Transverse colon (tissue), 4 donors: ENCODE measurements at regions of chr17 and their contacts with region 1.

Region 1: DNA sequence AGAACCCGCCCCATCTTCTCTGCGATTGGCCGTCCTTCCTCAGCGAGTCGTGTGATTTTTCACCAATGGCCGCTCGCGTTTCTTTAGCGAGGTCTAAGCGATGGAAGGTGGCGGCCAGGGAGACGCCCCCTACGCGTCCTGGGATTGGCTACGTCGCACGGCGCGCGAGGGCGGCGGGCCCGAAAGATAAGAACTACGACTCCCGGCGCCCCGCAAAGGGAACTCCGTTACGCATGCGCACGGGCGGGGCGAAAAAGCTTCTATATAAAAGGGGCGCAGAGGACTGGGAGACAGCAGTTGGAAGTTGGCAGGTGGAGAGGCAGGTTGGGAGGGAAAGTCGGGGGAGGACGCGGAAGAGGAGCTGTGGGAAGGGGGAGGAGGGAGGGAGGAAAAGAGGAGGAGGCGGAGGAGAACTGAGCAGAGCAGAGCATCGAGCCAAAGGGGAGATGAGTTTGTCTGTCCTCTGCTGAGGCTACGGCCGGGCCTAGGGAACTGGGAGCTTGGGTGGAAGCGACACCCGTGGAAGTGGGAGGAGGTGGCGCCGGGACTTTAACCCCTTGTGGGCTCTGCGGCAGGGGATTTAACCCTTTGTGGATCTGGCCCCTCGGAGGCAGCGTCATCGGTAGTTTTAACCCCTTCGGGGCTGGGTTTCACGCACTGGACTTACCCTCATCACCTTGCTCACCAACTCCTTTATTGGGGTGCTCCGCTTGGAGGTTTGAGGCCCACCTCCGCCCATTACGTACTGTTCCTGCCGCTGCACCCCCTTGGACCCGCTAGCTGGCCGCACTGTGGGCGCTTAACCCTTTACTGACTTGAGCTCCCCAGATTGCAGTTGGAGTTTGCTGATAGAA is at the start of gene HEXIM1:
- DNase-seq: peak; percentile 99
- H3K4me3 ChIP-seq: peak within 1 kb of the TSS; percentile 69 to 90 (median 78)
- H3K27ac ChIP-seq: peak within 1 kb of the TSS; percentile 98 to 99 (median 98)
- H3K4me1 ChIP-seq: peaks cover 17 to 67% (median 49%) of the 10 kb centered on the region in 4 donors
- H3K27me3 ChIP-seq: no peaks in the 10 kb centered on the region
- CTCF ChIP-seq: no peak
- EP300 ChIP-seq: no peak
- POLR2A ChIP-seq: peak; percentile 100
- total RNA-seq, gene HEXIM1: 38.0 to 54.9 (median 42.6) TPM

Region 2: GRCh38 chr17:44186307-44187130 is 961.9 kb before region 1 on chr17 and contains the start of gene TMUB2:
- in situ Hi-C with region 1: no loop called
- intact Hi-C with region 1: loop called (anchors 10 kb)
- DNase-seq: peak; percentile 100
- H3K4me3 ChIP-seq: peak within 1 kb of the TSS; percentile 92 to 95 (median 93)
- H3K27ac ChIP-seq: peak within 1 kb of the TSS; percentile 95 to 97 (median 96)
- H3K4me1 ChIP-seq: peaks cover 11 to 29% (median 23%) of the 10 kb centered on the region in 4 donors
- H3K27me3 ChIP-seq: no peaks in the 10 kb centered on the region
- CTCF ChIP-seq: no peak
- EP300 ChIP-seq: peak; percentile 20
- POLR2A ChIP-seq: peak; percentile 84
- total RNA-seq, gene TMUB2: 53.4 to 70.5 (median 60.6) TPM

Region 3: DNA sequence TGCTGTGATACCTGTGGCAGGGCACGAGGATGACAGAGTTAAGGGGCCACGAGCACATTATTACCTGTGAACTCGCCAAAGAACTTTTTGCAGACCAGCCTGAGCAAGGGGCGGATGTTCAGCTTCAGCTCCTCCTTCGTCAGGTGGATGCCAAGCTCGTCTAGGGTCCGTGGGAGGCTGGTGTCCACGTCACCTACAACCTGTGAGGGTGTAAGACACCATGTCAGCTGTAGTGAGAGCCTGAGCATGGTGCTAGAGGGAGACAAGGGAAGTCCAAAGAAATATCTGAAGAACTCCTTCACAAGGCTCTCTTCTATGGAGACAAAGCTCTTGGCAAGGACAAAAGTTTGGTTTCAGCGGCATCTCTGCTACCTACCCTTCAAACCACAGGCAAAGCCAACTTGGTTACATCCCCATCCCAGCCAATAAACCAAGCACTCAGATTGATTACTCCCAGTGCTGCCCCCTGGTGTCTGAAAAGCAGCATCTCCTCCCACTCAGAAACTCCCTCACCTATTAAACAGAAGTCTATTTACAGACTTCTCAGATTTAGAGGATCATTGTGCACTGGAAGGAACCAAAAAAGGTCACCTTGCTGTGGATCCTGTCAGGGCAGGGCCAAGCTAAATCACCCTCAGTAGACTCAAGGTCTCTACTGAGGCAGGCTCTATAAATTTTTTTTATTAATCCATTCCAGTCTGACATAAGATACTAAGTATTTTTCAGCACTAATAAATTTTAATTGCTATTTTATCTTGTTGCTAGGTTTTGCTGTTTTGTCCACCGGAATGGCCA is 283.3 kb before region 1 on chr17:
- in situ Hi-C with region 1: no loop called
- intact Hi-C with region 1: no loop called
- DNase-seq: peak; percentile 69
- H3K4me3 ChIP-seq: no peak overlapping the region
- H3K27ac ChIP-seq: peak overlapping the region; percentile 8 to 81 (median 72)
- H3K4me1 ChIP-seq: peaks cover 0 to 5% (median 4%) of the 10 kb centered on the region in 4 donors
- H3K27me3 ChIP-seq: no peaks in the 10 kb centered on the region
- CTCF ChIP-seq: peak; percentile 84 to 92 (median 89)
- EP300 ChIP-seq: peak; percentile 16
- POLR2A ChIP-seq: no peak

Region 4: GRCh38 chr17:45021607-45022287 is 126.7 kb before region 1 on chr17:
- in situ Hi-C with region 1: no loop called
- intact Hi-C with region 1: no loop called
- DNase-seq: peak; percentile 72
- H3K4me3 ChIP-seq: peak overlapping the region in 3 of 4 donors; percentile 33 to 51 (median 35)
- H3K27ac ChIP-seq: peak overlapping the region; percentile 76 to 85 (median 83)
- H3K4me1 ChIP-seq: peaks cover 30 to 44% (median 30%) of the 10 kb centered on the region in 4 donors
- H3K27me3 ChIP-seq: peaks cover 8% of the 10 kb centered on the region
- CTCF ChIP-seq: peak in 4 of 5 experiments; percentile 65 to 90 (median 87)
- EP300 ChIP-seq: no peak
- POLR2A ChIP-seq: peak; percentile 33

Region 5: DNA sequence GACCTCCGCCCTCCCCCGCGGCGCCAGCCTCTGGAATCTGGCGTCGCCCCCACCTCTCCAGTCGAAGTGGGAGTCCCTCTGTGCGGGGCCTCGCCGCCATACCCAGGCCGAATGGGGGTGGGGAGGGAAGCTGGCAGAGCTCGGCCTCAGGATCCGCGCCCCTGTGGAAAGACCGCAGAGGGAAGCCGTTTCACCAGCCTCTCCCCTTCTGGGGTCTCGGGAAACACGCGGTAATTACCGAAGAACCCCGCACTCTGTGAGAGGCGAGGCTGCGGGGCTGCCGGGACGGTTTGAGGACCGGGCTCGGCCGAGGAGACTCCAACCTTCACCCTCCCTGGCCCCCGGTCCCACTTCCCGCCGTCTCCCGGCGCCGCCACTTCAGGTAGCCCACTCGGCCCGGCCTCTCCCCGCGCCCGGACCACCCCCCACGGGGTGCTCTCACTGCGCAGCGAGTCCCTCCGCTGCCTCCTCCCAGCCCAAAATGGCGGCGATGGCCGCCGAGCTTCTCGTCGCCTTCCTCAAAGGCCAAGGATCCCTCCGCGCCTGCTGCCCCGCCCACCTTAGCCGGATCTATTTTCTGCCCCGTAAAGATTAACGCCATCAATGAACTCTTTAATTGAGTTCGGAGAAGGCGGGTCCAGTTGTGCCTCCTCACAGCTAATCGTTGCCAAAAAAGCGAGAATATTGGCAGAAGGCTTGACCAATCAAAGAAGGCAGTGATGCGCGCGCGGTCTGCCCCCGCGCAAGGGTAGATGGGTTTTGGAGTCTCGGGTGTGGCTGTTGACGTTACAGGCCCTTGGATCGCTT is 12.8 kb after region 1 on chr17:
- in situ Hi-C with region 1: no loop called
- intact Hi-C with region 1: loop called (anchors 2 kb)
- DNase-seq: peak; percentile 99
- H3K4me3 ChIP-seq: peak overlapping the region; percentile 59 to 85 (median 75)
- H3K27ac ChIP-seq: peak overlapping the region; percentile 94 to 99 (median 98)
- H3K4me1 ChIP-seq: peaks cover 19 to 47% (median 36%) of the 10 kb centered on the region in 4 donors
- H3K27me3 ChIP-seq: no peaks in the 10 kb centered on the region
- CTCF ChIP-seq: peak in 4 of 5 experiments; percentile 6 to 42 (median 17)
- EP300 ChIP-seq: no peak
- POLR2A ChIP-seq: peak; percentile 91

Region 6: GRCh38 chr17:45197555-45198334 is 49.3 kb after region 1 on chr17:
- in situ Hi-C with region 1: no loop called
- intact Hi-C with region 1: loop called (anchors 1 kb)
- DNase-seq: peak; percentile 95
- H3K4me3 ChIP-seq: no peak overlapping the region
- H3K27ac ChIP-seq: peak overlapping the region; percentile 50 to 70 (median 62)
- H3K4me1 ChIP-seq: peaks cover 3 to 13% (median 8%) of the 10 kb centered on the region in 4 donors
- H3K27me3 ChIP-seq: no peaks in the 10 kb centered on the region
- CTCF ChIP-seq: peak; percentile 97 to 100 (median 99)
- EP300 ChIP-seq: no peak
- POLR2A ChIP-seq: no peak